Cardiac septum (tissue), 1 donor: ENCODE measurements at regions of chr2 and their contacts with region 1.

Region 1: GRCh38 chr2:23636426-23636825 is 251.4 kb downstream of the KLHL29 start:
- DNase-seq: no peak

Region 2: DNA sequence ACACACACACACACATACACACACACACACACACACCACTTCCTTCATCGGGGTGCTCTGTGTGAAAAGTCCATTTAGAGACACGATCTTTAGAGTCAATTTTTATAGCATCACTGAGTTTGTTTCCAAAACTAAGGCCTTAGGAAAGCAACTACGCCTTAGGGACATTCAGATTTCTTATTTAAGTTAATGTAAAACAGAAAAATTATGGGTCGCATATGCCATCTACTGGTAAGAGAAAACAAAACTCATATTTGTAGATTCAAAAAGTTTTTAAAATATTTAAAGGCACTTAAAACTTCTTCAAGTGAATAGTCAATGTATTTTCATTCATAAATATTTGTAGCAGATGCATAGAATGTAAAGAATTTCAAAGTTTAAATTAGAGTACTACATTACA is 124.3 kb after region 1 on chr2:
- intact Hi-C with region 1: loop called (anchors 10 kb)
- DNase-seq: no peak